ENCODE measurements at regions of chr20 and their contacts with region 1.

Region 1: GRCh38 chr20:362271-363254 is 15.7 kb downstream of the NRSN2 start:
- DNase-seq: peak; percentile 95
- ATAC-seq: peak; percentile 87
- H3K4me3 ChIP-seq: no peak overlapping the region
- H3K27ac ChIP-seq: peak overlapping the region; percentile 58
- H3K4me1 ChIP-seq: peaks cover 53 to 59% of the 10 kb centered on the region in 2 experiments
- H3K27me3 ChIP-seq: no peaks in the 10 kb centered on the region
- CTCF ChIP-seq: peak in 2 of 3 experiments; percentile 66; a peak in 4 of 6 replicates
- POLR2A ChIP-seq: no peak
- RAD21 ChIP-seq: no peak

Region 2: DNA sequence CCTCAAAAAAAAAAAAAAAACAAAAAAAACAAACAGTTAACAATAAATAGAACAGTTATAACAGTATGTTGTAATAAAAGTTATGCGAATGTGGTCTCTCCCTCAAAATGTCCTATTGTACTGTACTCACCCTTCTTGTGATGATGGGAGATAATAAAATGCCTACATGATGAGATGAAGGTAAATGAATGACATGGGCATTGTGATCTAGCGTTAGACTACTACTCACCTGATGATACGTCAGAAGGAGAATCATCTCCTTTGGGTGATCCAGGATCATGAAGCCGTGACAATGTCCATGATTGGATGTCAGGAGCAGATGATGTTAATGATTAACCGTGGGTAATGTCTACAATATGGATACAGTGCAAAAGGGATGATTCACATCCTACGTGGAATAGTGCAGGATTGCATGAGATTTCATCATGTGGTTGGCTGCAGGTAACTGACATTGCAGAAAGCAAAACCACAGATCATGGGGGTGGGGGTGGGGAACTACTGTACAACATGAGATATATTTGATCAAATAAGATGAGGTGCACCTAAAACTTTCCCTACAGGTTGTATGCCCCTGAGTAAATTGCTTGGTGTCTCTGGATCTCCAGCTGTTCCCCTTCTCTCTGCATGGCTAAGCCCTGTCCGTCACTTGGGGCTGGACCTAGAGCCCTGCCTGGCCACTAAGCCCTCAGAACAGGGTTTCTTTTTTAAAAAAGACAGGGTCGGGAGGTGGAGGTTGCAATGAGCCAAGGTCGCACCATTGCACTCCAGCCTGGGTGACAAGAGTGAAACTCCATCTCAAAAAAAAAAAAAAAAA is 39.3 kb after region 1 on chr20:
- CTCF ChIA-PET with region 1: interaction called, 7 read pairs
- POLR2A ChIA-PET with region 1: interaction called, 639 read pairs
- RAD21 ChIA-PET with region 1: no interaction called
- intact Hi-C with region 1: loop called (anchors 5 kb)
- DNase-seq: peak; percentile 94
- ATAC-seq: peak; percentile 69
- H3K4me3 ChIP-seq: no peak overlapping the region
- H3K27ac ChIP-seq: peak overlapping the region; percentile 18; the same call in 1 of the 2 replicates
- H3K4me1 ChIP-seq: peaks cover 20 to 35% of the 10 kb centered on the region in 2 experiments
- H3K27me3 ChIP-seq: no peaks in the 10 kb centered on the region
- CTCF ChIP-seq: no peak
- POLR2A ChIP-seq: no peak
- RAD21 ChIP-seq: no peak; the same call in 1 of the 2 replicates

Region 3: DNA sequence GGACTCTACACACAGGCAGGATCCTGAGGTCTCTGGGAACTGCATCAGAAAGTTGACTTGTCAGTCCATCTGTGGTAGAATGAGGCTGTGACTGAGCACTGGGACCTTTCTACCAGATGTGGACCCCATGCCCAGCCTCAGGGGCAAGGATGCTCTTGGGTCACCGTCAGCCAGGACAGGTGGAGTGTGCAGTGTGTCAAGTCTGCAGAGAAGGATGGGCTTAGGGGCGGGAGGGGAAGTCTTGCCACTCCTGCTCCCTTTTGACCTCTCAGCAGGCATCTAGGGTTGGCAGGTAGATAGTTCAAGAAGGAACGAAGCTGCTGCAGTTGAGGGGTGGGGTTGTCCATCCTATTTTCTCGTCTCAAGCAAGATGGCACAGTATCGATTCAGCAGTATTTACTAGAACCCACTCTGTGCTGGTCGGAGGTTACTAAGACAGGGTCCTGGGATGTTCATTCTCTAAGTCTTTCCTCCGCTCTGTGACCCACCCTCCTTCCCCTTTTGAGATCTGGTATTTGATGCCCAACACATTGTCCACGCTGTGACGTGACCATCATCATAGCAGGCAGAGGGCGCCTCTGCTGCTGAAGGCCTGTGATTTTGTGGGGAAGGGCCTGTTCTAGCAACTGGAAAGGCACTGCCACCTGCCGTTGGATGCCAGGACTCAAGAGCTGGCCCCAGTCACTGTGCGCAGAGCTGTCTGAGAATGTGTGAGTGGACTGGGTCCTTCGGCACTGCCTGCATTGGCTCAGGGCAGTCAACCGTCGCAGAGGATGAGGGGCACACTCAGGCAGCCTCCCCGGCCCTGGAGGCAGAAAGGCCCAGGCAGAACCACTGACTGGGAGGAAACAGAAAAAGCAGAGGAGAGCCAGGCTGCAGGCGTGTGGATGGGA is 68.7 kb after region 1 on chr20:
- CTCF ChIA-PET with region 1: interaction called, 24 read pairs
- POLR2A ChIA-PET with region 1: interaction called, 3 read pairs
- RAD21 ChIA-PET with region 1: interaction called in 1 of 2 experiments, 4 read pairs
- intact Hi-C with region 1: loop called (anchors 2 kb)
- DNase-seq: peak; percentile 69
- ATAC-seq: peak; percentile 89
- H3K4me3 ChIP-seq: no peak overlapping the region
- H3K27ac ChIP-seq: no peak overlapping the region
- H3K4me1 ChIP-seq: peaks cover 0 to 5% of the 10 kb centered on the region in 2 experiments; a peak in 1 of 4 replicates
- H3K27me3 ChIP-seq: no peaks in the 10 kb centered on the region
- CTCF ChIP-seq: peak; percentile 83 to 99 (median 91)
- POLR2A ChIP-seq: no peak
- RAD21 ChIP-seq: peak; percentile 86